PC-3 (cell line): ENCODE measurements at regions of chr2 and their contacts with region 1.

Region 1: DNA sequence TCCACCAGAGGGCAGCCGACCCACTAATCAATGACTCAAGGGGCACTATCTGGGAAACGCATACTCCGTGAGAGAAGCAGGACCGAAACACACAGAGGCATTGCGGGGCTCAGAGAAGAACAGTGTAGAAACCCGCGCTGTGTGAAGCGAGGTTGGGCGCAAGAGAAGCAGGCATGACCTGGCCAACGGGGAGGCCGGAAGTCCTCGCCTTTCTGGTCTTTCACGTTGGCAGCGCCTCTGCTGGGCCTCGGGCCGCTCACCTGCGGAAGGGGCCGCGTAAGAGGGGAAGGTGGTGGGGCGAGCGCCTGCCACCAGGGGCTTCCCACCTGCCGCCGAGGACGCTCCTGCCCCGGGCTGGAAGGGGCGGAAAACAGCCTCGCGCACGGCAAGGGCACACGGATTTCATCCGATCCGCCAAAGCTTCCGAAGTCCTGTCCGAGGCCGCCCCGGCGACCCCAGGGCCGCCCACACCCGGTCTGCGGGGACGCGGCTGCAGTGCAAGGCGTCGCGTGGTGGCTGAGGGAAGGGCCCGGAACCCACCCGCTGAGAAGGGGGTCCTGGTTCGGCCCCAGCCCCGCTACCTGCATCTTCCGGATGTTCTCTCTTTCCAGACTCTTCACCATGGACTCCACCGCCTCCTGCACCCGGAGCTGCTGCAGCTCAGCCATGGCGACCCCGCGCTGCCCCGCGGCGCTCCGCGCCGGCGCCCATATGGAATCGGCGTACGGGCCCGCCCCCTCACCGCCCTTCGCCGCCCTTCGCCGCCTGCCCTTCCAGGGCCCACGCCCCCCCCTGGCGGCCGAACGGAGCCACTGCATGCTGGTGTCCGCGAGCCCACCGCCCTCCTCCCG is at the start of gene FAM136A:
- DNase-seq: peak; percentile 86
- ATAC-seq: peak; percentile 85
- H3K4me3 ChIP-seq: peak within 1 kb of the TSS; percentile 71
- H3K27ac ChIP-seq: peak within 1 kb of the TSS; percentile 17; the same call in 1 of the 2 replicates
- H3K4me1 ChIP-seq: peaks cover 7% of the 10 kb centered on the region
- H3K27me3 ChIP-seq: no peaks in the 10 kb centered on the region
- CTCF ChIP-seq: peak; percentile 78
- total RNA-seq, gene FAM136A: 67.6 and 70.8 TPM in 2 replicates

Region 2: DNA sequence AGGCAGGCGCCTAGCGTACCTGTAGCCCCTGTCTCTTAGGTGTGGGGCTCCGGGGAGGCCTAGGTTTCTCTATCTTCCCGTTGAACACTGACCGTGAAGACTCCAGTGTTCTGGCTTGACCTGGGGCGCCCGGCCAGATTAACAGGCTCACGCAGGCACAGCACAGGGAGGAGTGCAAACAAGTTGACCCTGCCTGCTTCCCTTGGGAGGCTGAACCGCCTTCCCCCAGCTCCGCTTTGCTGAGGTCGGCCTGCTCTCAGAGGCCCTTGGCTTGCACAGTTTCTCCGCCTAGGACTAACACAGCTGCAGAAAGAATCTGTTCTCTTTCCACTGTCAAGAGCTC is 43.1 kb before region 1 on chr2:
- CTCF ChIA-PET with region 1: no interaction called
- POLR2A ChIA-PET with region 1: interaction called, 14 read pairs
- intact Hi-C with region 1: no loop called
- DNase-seq: peak; percentile 21
- ATAC-seq: peak; percentile 37
- H3K4me3 ChIP-seq: peak overlapping the region; percentile 98
- H3K27ac ChIP-seq: no peak overlapping the region
- H3K4me1 ChIP-seq: peaks cover 6% of the 10 kb centered on the region; the same call in 1 of the 2 replicates
- H3K27me3 ChIP-seq: no peaks in the 10 kb centered on the region
- CTCF ChIP-seq: no peak

Region 3: GRCh38 chr2:70381831-70382267 is 80.3 kb after region 1 on chr2:
- CTCF ChIA-PET with region 1: no interaction called
- POLR2A ChIA-PET with region 1: no interaction called
- intact Hi-C with region 1: no loop called
- DNase-seq: peak; percentile 59
- ATAC-seq: peak; percentile 78
- H3K4me3 ChIP-seq: no peak overlapping the region
- H3K27ac ChIP-seq: peak overlapping the region; percentile 65
- H3K4me1 ChIP-seq: peaks cover 27% of the 10 kb centered on the region
- H3K27me3 ChIP-seq: no peaks in the 10 kb centered on the region
- CTCF ChIP-seq: no peak

Region 4: DNA sequence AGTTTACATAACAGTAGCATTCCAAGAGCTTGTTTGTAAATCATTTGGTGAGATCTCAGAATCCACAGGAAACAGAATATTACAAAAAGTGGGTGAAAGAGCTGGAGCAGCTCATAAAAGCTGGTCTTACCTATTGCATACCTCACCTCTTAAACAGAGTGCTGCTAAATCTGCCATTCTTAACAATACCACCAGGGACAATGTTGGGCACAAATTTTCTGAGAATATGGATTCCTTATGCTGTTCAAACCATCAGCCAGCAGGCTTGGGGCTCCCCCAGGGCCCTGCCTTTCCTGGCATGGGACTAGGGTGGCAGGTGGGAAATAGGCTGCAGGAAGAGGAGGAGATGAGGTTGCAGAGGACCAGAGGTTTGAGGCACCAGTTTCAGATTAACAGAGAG is 196.5 kb after region 1 on chr2:
- CTCF ChIA-PET with region 1: interaction called, 10 read pairs
- POLR2A ChIA-PET with region 1: no interaction called
- intact Hi-C with region 1: no loop called
- DNase-seq: peak; percentile 82
- ATAC-seq: peak; percentile 90
- H3K4me3 ChIP-seq: no peak overlapping the region
- H3K27ac ChIP-seq: no peak overlapping the region
- H3K4me1 ChIP-seq: peaks cover 31% of the 10 kb centered on the region
- H3K27me3 ChIP-seq: no peaks in the 10 kb centered on the region
- CTCF ChIP-seq: peak; percentile 64

Region 5: GRCh38 chr2:70616168-70616694 is 314.7 kb after region 1 on chr2:
- CTCF ChIA-PET with region 1: interaction called, 22 read pairs
- POLR2A ChIA-PET with region 1: no interaction called
- intact Hi-C with region 1: loop called (anchors 1 kb)
- DNase-seq: peak; percentile 86
- ATAC-seq: peak; percentile 70
- H3K4me3 ChIP-seq: no peak overlapping the region
- H3K27ac ChIP-seq: 0 out of 2 replicates have a peak overlapping the region, but pooled peaks have one; percentile 4
- H3K4me1 ChIP-seq: peaks cover 20% of the 10 kb centered on the region
- H3K27me3 ChIP-seq: no peaks in the 10 kb centered on the region
- CTCF ChIP-seq: no peak

Region 6: DNA sequence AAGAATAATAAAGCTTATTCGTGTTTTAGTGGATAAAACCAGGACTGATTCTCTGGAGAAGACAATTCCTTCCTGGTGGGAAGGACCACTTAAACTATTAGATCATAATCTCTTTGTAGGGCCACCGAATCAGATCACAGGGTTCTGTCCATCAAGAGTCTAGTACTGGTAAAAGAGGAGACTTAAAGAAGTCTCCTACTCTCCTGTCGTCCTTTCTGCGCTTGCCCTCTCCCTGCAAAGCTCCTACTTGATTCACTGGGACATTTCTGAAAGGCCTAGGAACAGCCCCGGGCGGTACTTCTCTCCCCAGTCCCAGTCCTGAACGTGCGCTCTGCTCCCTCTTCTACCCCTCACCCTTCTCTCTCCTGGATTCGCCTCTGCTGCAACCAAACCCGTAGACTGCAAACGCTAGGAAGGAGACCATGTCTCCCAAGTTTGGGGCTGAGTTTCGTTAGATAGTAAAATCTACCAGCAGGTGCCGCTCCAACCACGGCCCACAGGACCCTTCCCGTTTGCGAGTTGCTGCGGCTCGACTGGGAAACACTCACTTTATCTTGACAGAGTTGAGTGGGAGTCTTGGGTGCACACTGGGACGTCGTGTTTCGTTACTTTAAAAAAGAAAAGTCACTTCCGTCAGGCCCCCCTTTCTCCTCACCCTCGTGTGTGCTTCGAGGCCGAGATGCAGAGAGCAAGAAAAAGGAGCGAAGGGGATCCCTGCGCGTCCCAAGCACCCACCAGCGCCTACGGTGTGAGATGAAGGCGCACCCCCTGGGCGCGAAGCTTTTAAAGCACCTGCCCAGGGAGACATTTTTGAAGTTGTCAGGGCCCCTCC is 488.0 kb after region 1 on chr2:
- CTCF ChIA-PET with region 1: interaction called, 3 read pairs
- POLR2A ChIA-PET with region 1: no interaction called
- intact Hi-C with region 1: loop called (anchors 10 kb)
- DNase-seq: peak; percentile 73
- ATAC-seq: peak; percentile 90
- H3K4me3 ChIP-seq: peak overlapping the region; percentile 29
- H3K27ac ChIP-seq: no peak overlapping the region
- H3K4me1 ChIP-seq: no peaks in the 10 kb centered on the region
- H3K27me3 ChIP-seq: peaks cover 58% of the 10 kb centered on the region
- CTCF ChIP-seq: peak; percentile 84